ENCODE measurements at regions of chr5 and their contacts with region 1.

Region 1: GRCh38 chr5:151157426-151158286 is at the start of gene ANXA6:
- DNase-seq: peak; percentile 80
- ATAC-seq: peak; percentile 47
- H3K4me3 Mint-ChIP-seq: peak within 1 kb of the TSS; percentile 91
- H3K27ac Mint-ChIP-seq: peak within 1 kb of the TSS; percentile 93
- H3K4me1 Mint-ChIP-seq: peaks cover 59% of the 10 kb centered on the region
- H3K27me3 Mint-ChIP-seq: no peaks in the 10 kb centered on the region
- total RNA-seq, gene ANXA6: 322 to 332 TPM

Region 2: GRCh38 chr5:151037561-151038411 is 119.9 kb before region 1 on chr5:
- CTCF ChIA-PET with region 1: no interaction called
- POLR2A ChIA-PET with region 1: no interaction called
- intact Hi-C with region 1: no loop called
- DNase-seq: peak; percentile 0
- ATAC-seq: no peak
- H3K4me3 Mint-ChIP-seq: no peak overlapping the region
- H3K27ac Mint-ChIP-seq: no peak overlapping the region
- H3K4me1 Mint-ChIP-seq: peaks cover 19% of the 10 kb centered on the region
- H3K27me3 Mint-ChIP-seq: no peaks in the 10 kb centered on the region

Region 3: GRCh38 chr5:151141535-151141934 is 16.1 kb before region 1 on chr5:
- CTCF ChIA-PET with region 1: interaction called, 685 read pairs
- POLR2A ChIA-PET with region 1: interaction called, 5 read pairs
- intact Hi-C with region 1: no loop called
- DNase-seq: peak; percentile 82
- ATAC-seq: peak; percentile 94
- H3K4me3 Mint-ChIP-seq: peak overlapping the region; percentile 64
- H3K27ac Mint-ChIP-seq: peak overlapping the region; percentile 82
- H3K4me1 Mint-ChIP-seq: peaks cover 85% of the 10 kb centered on the region
- H3K27me3 Mint-ChIP-seq: no peaks in the 10 kb centered on the region

Region 4: GRCh38 chr5:151171529-151171928 is 13.9 kb after region 1 on chr5:
- CTCF ChIA-PET with region 1: no interaction called
- POLR2A ChIA-PET with region 1: no interaction called
- intact Hi-C with region 1: no loop called
- DNase-seq: no peak
- ATAC-seq: no peak
- H3K4me3 Mint-ChIP-seq: no peak overlapping the region
- H3K27ac Mint-ChIP-seq: peak overlapping the region; percentile 4
- H3K4me1 Mint-ChIP-seq: peaks cover 6% of the 10 kb centered on the region
- H3K27me3 Mint-ChIP-seq: no peaks in the 10 kb centered on the region

Measured in activated CD4-positive, alpha-beta T cell treated with anti-CD3 and anti-CD28 coated beads for 36 hours (primary cell).